ENCODE measurements at regions of chr14 and their contacts with region 1.

Region 1: GRCh38 chr14:35292051-35292769 is at the start of gene PSMA6:
- DNase-seq: peak; percentile 99
- H3K4me3 ChIP-seq: peak within 1 kb of the TSS; percentile 47 to 59
- H3K27ac ChIP-seq: peak within 1 kb of the TSS; percentile 73 to 82
- H3K4me1 ChIP-seq: peaks cover 6% of the 10 kb centered on the region
- H3K27me3 ChIP-seq: no peaks in the 10 kb centered on the region
- CTCF ChIP-seq: peak in 1 of 4 experiments; percentile 6
- POLR2A ChIP-seq: peak; percentile 73
- total RNA-seq, gene PSMA6: 84.1 to 181 TPM

Region 2: GRCh38 chr14:35114034-35114433 is 178.2 kb before region 1 on chr14:
- intact Hi-C with region 1: no loop called
- DNase-seq: no peak
- H3K4me3 ChIP-seq: no peak overlapping the region
- H3K27ac ChIP-seq: no peak overlapping the region
- H3K4me1 ChIP-seq: peaks cover 4% of the 10 kb centered on the region
- H3K27me3 ChIP-seq: no peaks in the 10 kb centered on the region
- CTCF ChIP-seq: no peak
- POLR2A ChIP-seq: no peak

Region 3: DNA sequence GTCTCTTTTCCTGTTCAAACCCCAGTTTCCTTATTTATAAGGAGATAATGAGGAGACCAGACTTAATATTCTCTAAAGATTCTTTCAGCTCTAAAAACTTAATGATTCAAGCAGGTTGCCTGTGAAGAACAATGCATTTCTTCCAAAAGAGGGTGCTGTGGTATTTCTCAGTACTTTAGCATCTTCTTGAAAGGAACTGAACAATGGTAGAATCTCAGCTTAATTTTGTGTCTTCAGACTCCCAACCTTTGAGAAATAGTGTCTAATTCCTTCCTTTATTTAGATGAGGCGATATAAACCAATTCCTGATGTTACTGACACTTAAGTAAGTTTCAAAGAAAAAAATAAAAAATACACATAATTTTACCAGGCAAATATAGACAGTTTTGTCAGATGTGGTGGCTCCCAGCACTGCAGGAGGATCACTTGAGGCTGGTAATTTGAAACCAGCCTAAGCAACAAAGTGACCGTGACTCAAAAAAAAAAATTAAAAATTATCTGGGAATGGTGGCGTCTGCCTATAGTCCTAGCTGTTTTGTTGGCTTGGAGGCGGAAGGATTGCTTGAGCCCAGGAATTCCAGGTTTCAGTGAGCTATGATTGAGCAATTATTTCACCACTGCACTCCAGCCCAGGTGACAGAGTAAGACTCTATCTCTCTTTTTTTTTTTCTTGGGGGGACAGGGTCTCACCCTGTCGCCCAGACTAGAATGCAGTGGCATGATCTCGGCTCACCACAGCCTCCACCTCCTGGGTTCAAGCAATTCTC is 76.9 kb before region 1 on chr14:
- intact Hi-C with region 1: loop called (anchors 10 kb)
- DNase-seq: no peak
- H3K4me3 ChIP-seq: no peak overlapping the region
- H3K27ac ChIP-seq: no peak overlapping the region
- H3K4me1 ChIP-seq: peaks cover 5% of the 10 kb centered on the region
- H3K27me3 ChIP-seq: no peaks in the 10 kb centered on the region
- CTCF ChIP-seq: peak in 3 of 4 experiments; percentile 29 to 52 (median 46)
- POLR2A ChIP-seq: no peak

Region 4: DNA sequence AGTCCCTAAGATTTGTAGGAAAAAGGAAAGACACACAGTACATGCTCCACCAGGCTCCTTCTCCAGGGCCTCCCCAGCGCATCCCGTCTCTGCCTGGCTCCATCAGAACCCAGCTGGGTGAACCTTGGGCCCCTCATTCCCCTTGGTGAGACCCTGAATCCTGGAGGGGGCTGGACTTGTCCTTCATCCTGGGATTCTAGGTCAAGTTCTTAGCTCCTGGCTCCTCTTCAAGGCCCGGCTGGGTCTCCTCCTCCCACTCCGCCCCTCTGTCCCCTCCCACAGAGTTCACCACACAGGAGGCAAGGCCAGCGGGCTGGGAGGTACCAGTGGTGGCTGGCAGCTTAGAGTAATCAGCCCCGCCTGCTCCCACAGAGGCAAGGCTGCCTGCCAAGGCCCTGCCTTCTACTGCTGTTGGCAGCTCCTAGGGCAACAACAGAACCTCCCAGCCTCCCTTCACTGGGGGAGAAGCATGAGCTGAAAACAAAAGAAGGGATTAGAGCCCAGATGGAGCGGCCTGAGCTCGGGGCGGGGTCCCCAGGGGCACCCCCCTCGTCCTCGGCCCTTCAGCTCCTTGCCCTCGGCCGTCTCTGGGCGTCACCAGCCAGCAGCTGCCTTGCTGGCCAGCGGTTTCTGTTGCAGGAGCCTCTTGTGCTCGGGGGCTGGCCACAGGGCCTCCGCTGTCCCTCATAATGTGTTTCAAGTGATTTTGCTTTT is 49.4 kb after region 1 on chr14:
- intact Hi-C with region 1: loop called (anchors 5 kb)
- DNase-seq: peak; percentile 99
- H3K4me3 ChIP-seq: peak overlapping the region in 1 of 2 donors; percentile 11
- H3K27ac ChIP-seq: peak overlapping the region; percentile 94 to 95
- H3K4me1 ChIP-seq: peaks cover 17% of the 10 kb centered on the region
- H3K27me3 ChIP-seq: no peaks in the 10 kb centered on the region
- CTCF ChIP-seq: peak in 1 of 4 experiments; percentile 1
- POLR2A ChIP-seq: peak; percentile 77

Region 5: GRCh38 chr14:35385042-35385839 is 93.0 kb after region 1 on chr14:
- intact Hi-C with region 1: loop called (anchors 5 kb)
- DNase-seq: peak; percentile 72
- H3K4me3 ChIP-seq: no peak overlapping the region
- H3K27ac ChIP-seq: peak overlapping the region; percentile 63 to 67
- H3K4me1 ChIP-seq: peaks cover 5% of the 10 kb centered on the region
- H3K27me3 ChIP-seq: no peaks in the 10 kb centered on the region
- CTCF ChIP-seq: no peak
- POLR2A ChIP-seq: no peak

Region 6: DNA sequence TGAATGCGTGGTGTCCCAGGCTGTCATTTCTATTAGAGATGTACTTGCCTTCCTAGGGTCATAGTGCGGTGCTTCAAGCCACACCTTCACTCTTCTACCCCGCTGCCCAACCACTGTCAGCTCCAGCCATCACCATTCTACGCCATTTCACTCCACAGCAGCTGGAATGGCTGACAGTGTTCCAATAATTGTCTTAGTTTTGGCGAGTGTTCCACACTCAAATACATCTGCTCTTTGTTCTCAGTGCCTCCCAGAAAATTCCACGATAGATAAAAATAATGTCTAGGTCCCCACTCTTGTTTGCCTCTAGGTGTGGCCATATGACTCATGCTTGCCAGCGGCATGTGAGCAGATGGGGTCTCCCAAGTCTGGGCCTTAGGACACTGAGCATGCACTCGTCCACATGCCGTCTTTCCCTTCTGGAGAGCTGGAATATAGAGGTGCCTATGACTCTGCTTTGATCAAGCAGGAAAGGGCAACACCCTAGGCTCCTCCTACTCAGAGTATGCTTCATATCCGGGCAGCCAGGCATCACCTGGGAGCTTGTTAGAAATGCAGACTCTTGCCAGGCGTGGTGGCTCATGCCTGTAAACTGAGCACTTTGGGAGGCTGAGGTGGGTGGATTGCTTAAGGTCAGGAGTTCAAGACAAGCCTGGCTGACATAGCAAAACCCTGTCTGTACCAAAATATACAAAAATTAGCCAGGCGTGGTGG is 696.9 kb after region 1 on chr14:
- intact Hi-C with region 1: no loop called
- DNase-seq: no peak
- H3K4me3 ChIP-seq: no peak overlapping the region
- H3K27ac ChIP-seq: no peak overlapping the region
- H3K4me1 ChIP-seq: no peaks in the 10 kb centered on the region
- H3K27me3 ChIP-seq: no peaks in the 10 kb centered on the region
- CTCF ChIP-seq: no peak
- POLR2A ChIP-seq: no peak